A673 (cell line): ENCODE measurements at regions of chr14 and their contacts with region 1.

Region 1: DNA sequence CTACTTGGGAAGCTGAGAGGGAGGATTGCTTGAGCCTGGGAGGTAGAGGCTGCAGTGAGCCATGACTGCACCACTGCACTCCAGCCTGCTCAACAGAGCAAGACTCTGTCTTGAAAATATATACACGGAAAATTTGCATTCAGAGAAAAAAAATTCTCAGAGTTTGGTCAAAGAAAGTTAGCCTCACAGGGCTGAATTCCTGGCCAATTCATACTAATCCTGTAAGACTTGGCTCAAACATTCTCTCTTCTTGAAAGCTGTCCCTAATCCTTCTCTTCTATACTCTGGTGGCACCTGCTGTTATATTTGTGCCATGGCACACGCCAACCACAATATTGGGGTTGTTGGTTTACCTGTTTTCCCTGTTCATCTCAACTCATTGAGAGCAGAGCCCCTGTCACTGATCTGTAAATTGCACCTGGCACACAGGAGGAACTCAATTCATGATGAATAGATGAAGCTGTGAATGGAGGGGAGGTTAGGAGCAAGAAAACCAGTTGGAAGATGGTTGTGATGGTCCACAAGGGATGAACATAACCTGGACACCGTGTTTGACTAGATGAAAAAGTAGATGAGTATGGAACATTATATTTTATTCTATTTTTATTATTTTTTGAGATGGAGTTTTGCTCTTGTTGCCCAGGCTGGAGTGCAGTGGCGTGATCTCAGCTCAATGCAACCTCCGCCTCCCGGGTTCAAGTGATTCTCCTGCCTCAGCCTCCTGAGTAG is 36.8 kb upstream of the SPTSSA start:
- DNase-seq: peak; percentile 63
- H3K4me3 ChIP-seq: no peak overlapping the region
- H3K27ac ChIP-seq: no peak overlapping the region
- H3K4me1 ChIP-seq: peaks cover 9% of the 10 kb centered on the region
- H3K27me3 ChIP-seq: no peaks in the 10 kb centered on the region
- CTCF ChIP-seq: peak; percentile 76

Region 2: GRCh38 chr14:34322940-34323418 is 175.9 kb before region 1 on chr14:
- CTCF ChIA-PET with region 1: interaction called, 5 read pairs
- POLR2A ChIA-PET with region 1: no interaction called
- intact Hi-C with region 1: loop called (anchors 2 kb)
- DNase-seq: peak; percentile 79
- H3K4me3 ChIP-seq: no peak overlapping the region
- H3K27ac ChIP-seq: no peak overlapping the region
- H3K4me1 ChIP-seq: no peaks in the 10 kb centered on the region
- H3K27me3 ChIP-seq: no peaks in the 10 kb centered on the region
- CTCF ChIP-seq: peak; percentile 85

Region 3: DNA sequence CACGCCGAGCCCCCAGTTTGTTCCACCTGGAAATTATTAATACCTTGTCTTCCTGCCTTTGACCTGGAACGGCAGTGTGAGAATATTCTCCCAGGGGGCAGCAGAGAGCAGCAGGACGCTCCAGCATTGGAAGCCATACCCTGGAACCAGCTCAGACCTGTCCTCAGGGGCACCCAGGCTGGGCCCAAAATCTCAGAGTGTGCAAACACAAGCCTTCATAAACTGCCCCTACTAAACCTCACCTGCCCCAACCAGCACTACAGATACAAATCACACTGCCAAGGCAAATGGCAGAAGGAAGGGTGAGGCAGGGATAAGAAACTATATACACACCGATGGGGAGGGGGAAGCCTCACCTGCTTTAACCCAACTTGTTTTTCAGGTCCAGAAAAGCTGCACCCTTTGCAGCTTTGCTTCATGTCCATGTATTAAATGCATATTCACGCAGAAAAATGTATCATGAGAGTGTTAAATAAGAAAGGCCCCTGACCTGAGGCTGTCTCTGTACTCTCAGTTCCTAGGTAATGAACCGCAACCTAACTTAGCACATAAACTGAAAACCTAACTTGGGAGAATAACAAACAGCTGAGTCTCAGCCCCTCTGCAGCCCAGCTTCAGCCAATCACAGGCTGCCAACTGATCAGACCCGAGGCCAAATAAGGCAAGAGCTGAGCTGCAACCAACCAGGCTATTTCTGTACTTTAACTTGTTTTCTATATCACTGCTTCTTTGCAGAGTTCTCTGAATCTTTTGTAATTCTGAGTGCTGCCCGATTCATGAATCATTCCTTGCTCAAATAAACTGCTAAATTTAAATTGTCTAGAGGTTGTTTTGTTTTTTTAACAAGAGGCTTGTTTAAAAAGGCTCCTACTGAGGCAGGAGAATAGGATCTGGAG is 166.9 kb before region 1 on chr14:
- CTCF ChIA-PET with region 1: interaction called, 12 read pairs
- POLR2A ChIA-PET with region 1: no interaction called
- intact Hi-C with region 1: loop called (anchors 2 kb)
- DNase-seq: peak; percentile 63
- H3K4me3 ChIP-seq: no peak overlapping the region
- H3K27ac ChIP-seq: no peak overlapping the region
- H3K4me1 ChIP-seq: no peaks in the 10 kb centered on the region
- H3K27me3 ChIP-seq: no peaks in the 10 kb centered on the region
- CTCF ChIP-seq: peak; percentile 90